ENCODE measurements at regions of chrX and their contacts with region 1.

Region 1: DNA sequence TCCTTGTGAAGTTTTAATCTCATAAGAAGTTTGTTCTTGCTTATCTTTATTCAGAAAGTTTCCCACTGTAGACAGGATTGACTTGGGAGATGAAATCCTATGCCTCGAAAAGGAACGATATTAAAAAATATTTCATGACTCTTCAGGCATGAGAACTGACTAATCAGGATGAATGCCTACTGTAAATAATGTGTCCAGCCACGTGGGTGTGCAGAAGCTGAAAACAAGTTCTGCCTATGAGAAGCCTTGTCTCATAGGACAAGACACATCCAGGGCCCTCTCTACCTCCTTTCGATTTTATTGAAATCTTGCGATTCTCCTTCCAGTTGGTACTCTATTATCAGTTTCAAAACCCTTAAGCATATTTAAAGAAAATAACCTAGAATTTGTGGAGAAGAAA is 84.1 kb downstream of the ASB9 start:
- DNase-seq: no peak
- ATAC-seq: no peak
- H3K4me3 ChIP-seq: no peak overlapping the region
- H3K4me3 Mint-ChIP-seq: no peak overlapping the region
- H3K27ac ChIP-seq: no peak overlapping the region
- H3K27ac Mint-ChIP-seq: no peak overlapping the region
- H3K4me1 ChIP-seq: no peaks in the 10 kb centered on the region
- H3K4me1 Mint-ChIP-seq: no peaks in the 10 kb centered on the region
- H3K27me3 ChIP-seq: no peaks in the 10 kb centered on the region
- H3K27me3 Mint-ChIP-seq: peaks cover 0 to 49% (median 0%) of the 10 kb centered on the region in 5 donors

Region 2: DNA sequence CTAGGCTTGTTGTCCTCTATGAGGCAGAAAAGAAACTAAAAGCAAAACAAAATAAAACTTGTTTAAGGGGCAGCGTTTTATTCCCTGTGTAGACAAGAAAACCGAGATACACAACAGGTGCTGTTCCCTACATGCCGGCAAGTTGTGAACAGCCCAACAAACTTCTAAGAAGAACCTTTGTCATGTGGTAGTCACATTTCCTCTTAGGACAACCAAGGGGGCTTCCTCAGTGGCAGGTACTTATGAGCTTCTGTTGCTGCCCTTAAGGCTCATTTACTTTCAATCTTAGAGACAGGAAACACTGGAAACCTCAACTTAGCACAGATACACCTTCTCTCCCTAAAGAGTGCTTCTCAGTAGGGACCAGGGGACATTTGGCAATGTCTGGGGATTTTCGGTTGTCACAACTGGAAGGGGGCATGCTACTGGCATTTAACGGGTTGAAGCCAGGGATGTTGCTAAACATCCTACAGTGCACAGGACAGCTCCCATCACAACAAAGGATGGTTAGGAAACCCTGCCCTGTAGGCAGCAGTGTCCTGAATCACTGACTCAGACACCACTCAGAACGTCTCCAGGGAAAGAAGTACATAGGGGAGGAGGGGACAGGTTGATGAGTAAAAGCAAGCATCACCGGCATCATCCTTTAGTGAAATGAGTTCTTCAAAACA is 26.9 kb before region 1 on chrX:
- CTCF ChIA-PET with region 1: no interaction called
- POLR2A ChIA-PET with region 1: no interaction called
- intact Hi-C with region 1: loop called in 1 of 2 experiments (anchors 1 kb)
- DNase-seq: peak in 5 of 9 donors; percentile 16 to 36 (median 21)
- ATAC-seq: peak; percentile 57
- H3K4me3 ChIP-seq: peak overlapping the region; percentile 36
- H3K4me3 Mint-ChIP-seq: peak overlapping the region; percentile 52 to 91 (median 82)
- H3K27ac ChIP-seq: no peak overlapping the region
- H3K27ac Mint-ChIP-seq: peak overlapping the region; percentile 72 to 98 (median 92)
- H3K4me1 ChIP-seq: peaks cover 7 to 17% of the 10 kb centered on the region in 2 donors
- H3K4me1 Mint-ChIP-seq: peaks cover 3 to 52% (median 39%) of the 10 kb centered on the region in 7 donors
- H3K27me3 ChIP-seq: no peaks in the 10 kb centered on the region
- H3K27me3 Mint-ChIP-seq: no peaks in the 10 kb centered on the region